ENCODE measurements at regions of chr6 and their contacts with region 1.

Region 1: GRCh38 chr6:30212865-30213666 is at the start of gene TRIM26:
- DNase-seq: peak; percentile 100
- H3K4me3 Mint-ChIP-seq: peak within 1 kb of the TSS; percentile 96
- H3K27ac Mint-ChIP-seq: peak within 1 kb of the TSS; percentile 98
- H3K4me1 Mint-ChIP-seq: peaks cover 47% of the 10 kb centered on the region
- H3K27me3 Mint-ChIP-seq: peaks cover 2% of the 10 kb centered on the region
- total RNA-seq, gene TRIM26: 58.3 and 60.1 TPM in 2 replicates

Region 2: DNA sequence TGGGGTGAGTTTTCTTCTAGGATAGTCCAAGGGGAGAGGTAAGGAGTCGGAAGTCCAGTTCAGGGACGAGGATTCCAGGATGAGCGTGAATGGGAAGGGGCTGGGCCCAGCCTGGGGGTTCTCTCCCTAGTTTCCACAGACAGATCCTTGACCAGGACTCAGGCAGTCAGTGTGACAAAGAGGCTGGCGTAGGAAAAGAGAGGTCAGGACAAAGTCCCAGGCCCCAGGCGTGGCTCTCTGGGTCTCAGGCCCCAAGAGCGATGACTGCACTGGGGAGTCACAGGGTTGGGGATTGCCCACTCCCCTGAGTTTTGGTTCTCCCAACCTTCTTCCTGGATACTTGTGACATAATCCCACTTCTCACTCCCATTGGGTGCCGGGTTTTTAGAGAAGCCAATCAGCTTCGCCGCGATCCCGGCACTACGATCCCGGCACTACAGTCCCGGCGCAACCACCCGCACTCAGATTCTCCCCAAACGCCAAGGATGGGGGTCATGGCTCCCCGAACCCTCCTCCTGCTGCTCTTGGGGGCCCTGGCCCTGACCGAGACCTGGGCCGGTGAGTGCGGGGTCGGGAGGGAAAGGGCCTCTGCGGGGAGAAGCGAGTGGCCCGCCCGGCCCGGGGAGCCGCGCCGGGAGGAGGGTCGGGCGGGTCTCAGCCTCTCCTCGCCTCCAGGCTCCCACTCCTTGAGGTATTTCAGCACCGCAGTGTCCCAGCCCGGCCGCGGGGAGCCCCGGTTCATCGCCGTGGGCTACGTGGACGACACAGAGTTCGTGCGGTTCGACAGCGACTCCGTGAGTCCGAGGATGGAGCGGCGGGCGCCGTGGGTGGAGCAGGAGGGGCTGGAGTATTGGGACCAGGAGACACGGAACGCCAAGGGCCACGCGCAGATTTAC is 46.3 kb after region 1 on chr6:
- intact Hi-C with region 1: loop called (anchors 5 kb)
- DNase-seq: peak; percentile 90
- H3K4me3 Mint-ChIP-seq: peak overlapping the region; percentile 85
- H3K27ac Mint-ChIP-seq: peak overlapping the region; percentile 73
- H3K4me1 Mint-ChIP-seq: peaks cover 13% of the 10 kb centered on the region
- H3K27me3 Mint-ChIP-seq: peaks cover 26% of the 10 kb centered on the region

Region 3: DNA sequence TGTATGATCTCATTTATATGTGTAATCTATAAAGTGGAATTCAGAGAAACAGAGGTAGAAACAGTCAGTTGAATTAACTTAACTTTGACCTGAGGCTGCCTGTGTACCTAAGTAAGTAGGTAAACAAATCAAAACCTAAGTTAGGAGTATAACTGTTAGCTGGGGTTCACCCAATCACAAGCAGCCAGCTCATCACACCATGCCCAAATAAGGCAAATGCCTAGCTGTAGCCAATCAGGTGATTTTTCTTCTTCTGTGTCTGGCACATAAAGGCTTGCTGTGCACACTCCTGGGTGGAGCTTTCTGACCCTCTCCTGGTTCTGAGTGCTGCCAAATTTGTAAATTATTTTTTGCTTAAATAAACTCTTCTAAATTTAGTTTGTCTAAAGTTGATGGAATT is 59.0 kb after region 1 on chr6:
- intact Hi-C with region 1: no loop called
- DNase-seq: no peak
- H3K4me3 Mint-ChIP-seq: no peak overlapping the region
- H3K27ac Mint-ChIP-seq: no peak overlapping the region
- H3K4me1 Mint-ChIP-seq: no peaks in the 10 kb centered on the region
- H3K27me3 Mint-ChIP-seq: peaks cover 32% of the 10 kb centered on the region

Region 4: DNA sequence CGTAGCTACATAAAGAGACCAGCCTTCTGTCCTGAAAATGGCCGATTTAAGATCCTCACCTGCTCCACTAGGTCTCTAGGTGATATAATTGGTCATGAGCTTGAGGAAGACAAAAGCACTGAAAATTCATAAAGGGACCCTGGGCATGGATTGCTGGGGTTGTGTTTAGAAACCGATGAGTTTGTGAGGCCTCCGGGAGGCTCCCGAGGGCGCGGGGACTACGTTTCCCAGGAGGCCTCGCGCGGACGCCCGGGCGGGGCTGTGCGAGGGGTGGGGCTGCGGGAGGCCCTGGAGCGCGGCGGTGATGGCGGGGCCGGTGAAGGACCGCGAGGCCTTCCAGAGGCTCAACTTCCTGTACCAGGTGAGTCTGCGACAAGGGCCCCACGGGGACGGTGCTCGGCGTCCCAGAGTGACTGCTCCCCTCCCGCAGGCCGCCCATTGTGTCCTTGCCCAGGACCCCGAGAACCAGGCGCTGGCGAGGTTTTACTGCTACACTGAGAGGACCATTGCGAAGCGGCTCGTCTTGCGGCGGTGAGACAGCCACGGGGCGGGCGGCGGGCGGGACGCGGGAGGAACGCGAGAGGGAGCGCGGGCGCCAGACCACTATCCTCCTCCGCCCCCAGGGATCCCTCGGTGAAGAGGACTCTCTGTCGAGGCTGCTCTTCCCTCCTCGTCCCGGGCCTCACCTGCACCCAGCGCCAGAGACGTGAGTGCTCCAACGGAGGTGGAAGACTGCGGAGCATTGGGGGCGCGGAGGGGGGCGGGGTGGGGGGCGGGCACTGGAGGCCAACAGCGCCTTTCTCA is 132.0 kb after region 1 on chr6 and contains the start of gene RPP21:
- intact Hi-C with region 1: loop called (anchors 5 kb)
- DNase-seq: peak; percentile 97
- H3K4me3 Mint-ChIP-seq: peak within 1 kb of the TSS; percentile 90
- H3K27ac Mint-ChIP-seq: peak within 1 kb of the TSS; percentile 89
- H3K4me1 Mint-ChIP-seq: peaks cover 17% of the 10 kb centered on the region
- H3K27me3 Mint-ChIP-seq: peaks cover 5% of the 10 kb centered on the region
- total RNA-seq, gene RPP21: 45.0 and 48.0 TPM in 2 replicates